Mammary epithelial cell (primary cell): ENCODE measurements at regions of chr10 and their contacts with region 1.

Region 1: GRCh38 chr10:98295907-98296306 is 27.9 kb upstream of the LOXL4 start:
- DNase-seq: no peak
- H3K4me3 ChIP-seq: no peak overlapping the region
- H3K27ac ChIP-seq: no peak overlapping the region
- H3K4me1 ChIP-seq: peaks cover 43% of the 10 kb centered on the region
- H3K27me3 ChIP-seq: no peaks in the 10 kb centered on the region
- CTCF ChIP-seq: no peak

Region 2: DNA sequence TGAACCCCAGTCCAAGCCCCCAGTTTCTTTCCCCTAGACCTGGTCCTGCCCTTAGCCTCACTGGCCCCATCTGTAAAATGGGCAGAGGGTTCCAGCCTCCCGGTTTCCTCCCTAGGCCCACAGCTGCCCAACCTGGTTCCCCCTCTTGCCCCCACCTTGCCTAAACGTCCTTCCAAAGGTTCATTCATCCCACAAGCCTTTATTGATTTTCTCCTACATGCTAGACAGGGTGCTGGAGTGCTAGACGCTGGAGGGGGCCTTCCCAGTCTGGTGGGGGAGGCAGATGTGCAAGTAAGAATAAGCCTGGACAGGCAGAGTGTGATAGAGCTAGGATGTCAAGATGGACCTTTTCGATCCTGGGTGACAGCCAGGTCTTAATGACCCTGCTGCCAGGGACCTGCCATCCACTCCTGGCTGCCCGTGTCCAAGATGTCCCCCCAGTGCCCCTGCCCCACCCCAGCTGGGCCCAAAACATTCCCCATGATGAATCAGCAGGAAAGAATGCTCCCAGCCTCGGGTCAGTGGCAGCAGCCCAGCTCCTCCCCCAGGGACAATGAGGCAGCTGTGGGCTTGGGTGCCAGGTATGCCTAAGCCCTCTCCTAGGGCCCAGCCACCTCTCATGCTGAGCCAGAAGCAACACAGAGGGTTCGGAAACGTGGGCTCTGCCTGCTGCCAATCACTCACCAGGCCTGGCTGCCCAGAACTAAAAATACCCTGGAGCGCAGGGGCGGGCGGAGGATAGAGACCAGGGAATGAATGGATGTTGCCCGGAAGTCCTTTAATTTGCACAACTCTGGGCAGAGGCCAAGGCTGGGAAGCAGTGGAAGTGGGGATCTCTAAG is 26.6 kb before region 1 on chr10:
- CTCF ChIA-PET with region 1: interaction called, 6 read pairs
- dilution Hi-C with region 1: no loop called
- in situ Hi-C with region 1: no loop called
- intact Hi-C with region 1: loop called (anchors 1 kb)
- DNase-seq: peak; percentile 63
- H3K4me3 ChIP-seq: no peak overlapping the region
- H3K27ac ChIP-seq: no peak overlapping the region
- H3K4me1 ChIP-seq: peaks cover 18% of the 10 kb centered on the region
- H3K27me3 ChIP-seq: no peaks in the 10 kb centered on the region
- CTCF ChIP-seq: no peak

Region 3: GRCh38 chr10:98316661-98317060 is 20.8 kb after region 1 on chr10:
- CTCF ChIA-PET with region 1: no interaction called
- dilution Hi-C with region 1: no loop called
- in situ Hi-C with region 1: no loop called
- intact Hi-C with region 1: no loop called
- DNase-seq: peak; percentile 49
- H3K4me3 ChIP-seq: no peak overlapping the region
- H3K27ac ChIP-seq: no peak overlapping the region
- H3K4me1 ChIP-seq: peaks cover 18% of the 10 kb centered on the region
- H3K27me3 ChIP-seq: no peaks in the 10 kb centered on the region
- CTCF ChIP-seq: no peak

Region 4: DNA sequence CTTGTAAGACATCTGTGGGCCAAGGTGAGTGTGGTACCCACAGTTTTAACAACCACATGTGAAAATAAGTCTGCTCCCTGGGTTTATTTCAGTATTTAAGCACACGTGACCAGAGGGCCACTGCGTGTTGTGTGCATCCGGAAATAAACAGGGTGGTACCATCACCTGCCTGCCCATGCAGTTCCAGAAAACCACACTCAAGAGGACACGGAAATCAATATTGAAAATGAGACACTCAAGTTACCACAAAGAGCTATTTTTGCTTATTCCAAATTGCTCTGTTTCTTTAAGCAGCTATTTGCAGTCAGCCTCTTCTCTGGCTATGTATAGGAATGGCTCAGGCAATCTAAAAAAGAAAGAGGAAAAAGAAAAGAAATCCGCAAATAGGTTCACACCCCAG is 43.9 kb after region 1 on chr10:
- CTCF ChIA-PET with region 1: no interaction called
- dilution Hi-C with region 1: loop called (anchors 5 kb)
- in situ Hi-C with region 1: no loop called
- intact Hi-C with region 1: no loop called
- DNase-seq: no peak
- H3K4me3 ChIP-seq: no peak overlapping the region
- H3K27ac ChIP-seq: no peak overlapping the region
- H3K4me1 ChIP-seq: peaks cover 10% of the 10 kb centered on the region
- H3K27me3 ChIP-seq: no peaks in the 10 kb centered on the region
- CTCF ChIP-seq: no peak